Heart left ventricle (tissue), 16 donors: ENCODE measurements at regions of chr9 and their contacts with region 1.

Region 1: DNA sequence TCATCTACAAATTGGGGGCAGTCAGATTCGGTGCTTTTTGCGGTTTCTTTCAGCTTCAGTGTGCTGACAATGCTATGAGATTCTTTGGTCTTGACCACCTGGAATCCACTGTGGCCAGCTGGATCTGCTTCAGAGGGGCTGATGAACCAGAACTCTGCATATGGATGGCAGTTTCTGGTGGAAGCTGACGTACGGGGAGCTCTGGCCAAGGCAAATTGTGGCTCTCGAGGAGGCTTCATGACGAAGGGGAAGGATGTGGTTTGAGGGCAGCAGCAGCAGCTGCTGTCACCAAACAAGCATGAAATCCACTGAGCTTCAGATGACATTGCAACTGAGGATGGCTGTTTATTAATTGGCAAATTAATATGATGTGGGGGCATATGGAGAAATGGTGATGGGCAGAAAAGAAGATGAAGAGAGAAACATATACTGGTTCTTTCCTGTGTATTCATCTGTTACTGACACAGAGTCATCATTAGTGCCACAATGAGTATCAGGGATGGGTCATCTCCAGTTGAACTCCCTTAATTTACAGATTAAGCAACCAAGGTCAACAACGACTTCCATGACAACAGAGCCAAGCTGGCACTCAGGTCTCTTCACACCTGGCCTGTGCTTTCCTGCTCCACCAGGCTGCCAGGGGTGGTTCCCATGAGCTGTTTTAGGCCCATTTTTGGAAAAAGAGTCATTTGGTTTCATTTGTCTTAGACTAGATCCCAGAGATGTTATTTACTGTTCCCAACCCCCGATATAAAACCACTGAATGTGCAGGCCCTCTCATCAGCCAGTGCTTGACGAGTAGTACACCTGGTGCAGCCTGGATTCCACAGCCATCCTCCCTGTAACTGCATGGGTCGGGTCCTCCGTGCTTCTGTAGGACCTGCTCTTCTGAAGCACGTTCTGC is 134.7 kb downstream of the AOPEP start:
- DNase-seq: peak in 2 of 5 donors; percentile 26 to 31
- ATAC-seq: peak in 1 of 4 donors; percentile 54
- H3K4me3 ChIP-seq: no peak overlapping the region
- H3K27ac ChIP-seq: peak overlapping the region in 1 of 12 donors; percentile 42
- H3K4me1 ChIP-seq: peaks cover 0 to 44% (median 24%) of the 10 kb centered on the region in 12 donors
- H3K27me3 ChIP-seq: no peaks in the 10 kb centered on the region
- CTCF ChIP-seq: no peak
- POLR2A ChIP-seq: no peak

Region 2: GRCh38 chr9:94805585-94805984 is 55.6 kb before region 1 on chr9:
- intact Hi-C with region 1: loop called in 4 of 10 experiments (anchors 5 to 10 kb)
- DNase-seq: no peak
- ATAC-seq: peak in 2 of 4 donors; percentile 57 to 59
- H3K4me3 ChIP-seq: no peak overlapping the region
- H3K27ac ChIP-seq: peak overlapping the region in 9 of 12 donors; percentile 7 to 57 (median 16)
- H3K4me1 ChIP-seq: peaks cover 0 to 61% (median 46%) of the 10 kb centered on the region in 12 donors
- H3K27me3 ChIP-seq: no peaks in the 10 kb centered on the region
- CTCF ChIP-seq: no peak
- POLR2A ChIP-seq: no peak

Region 3: GRCh38 chr9:94812343-94812742 is 48.9 kb before region 1 on chr9:
- intact Hi-C with region 1: loop called in 6 of 10 experiments (anchors 5 to 10 kb)
- DNase-seq: no peak
- ATAC-seq: peak in 3 of 4 donors; percentile 26 to 57 (median 28)
- H3K4me3 ChIP-seq: no peak overlapping the region
- H3K27ac ChIP-seq: peak overlapping the region in 7 of 12 donors; percentile 3 to 47 (median 31)
- H3K4me1 ChIP-seq: peaks cover 0 to 42% (median 24%) of the 10 kb centered on the region in 12 donors
- H3K27me3 ChIP-seq: no peaks in the 10 kb centered on the region
- CTCF ChIP-seq: no peak
- POLR2A ChIP-seq: no peak

Region 4: GRCh38 chr9:94819161-94819699 is 42.0 kb before region 1 on chr9:
- intact Hi-C with region 1: loop called in 5 of 10 experiments (anchors 5 to 10 kb)
- DNase-seq: peak in 2 of 5 donors; percentile 53 to 60
- ATAC-seq: peak in 3 of 4 donors; percentile 70 to 74 (median 72)
- H3K4me3 ChIP-seq: no peak overlapping the region
- H3K27ac ChIP-seq: peak overlapping the region in 11 of 12 donors; percentile 32 to 79 (median 50)
- H3K4me1 ChIP-seq: peaks cover 0 to 55% (median 11%) of the 10 kb centered on the region in 12 donors
- H3K27me3 ChIP-seq: no peaks in the 10 kb centered on the region
- CTCF ChIP-seq: no peak
- POLR2A ChIP-seq: no peak

Region 5: DNA sequence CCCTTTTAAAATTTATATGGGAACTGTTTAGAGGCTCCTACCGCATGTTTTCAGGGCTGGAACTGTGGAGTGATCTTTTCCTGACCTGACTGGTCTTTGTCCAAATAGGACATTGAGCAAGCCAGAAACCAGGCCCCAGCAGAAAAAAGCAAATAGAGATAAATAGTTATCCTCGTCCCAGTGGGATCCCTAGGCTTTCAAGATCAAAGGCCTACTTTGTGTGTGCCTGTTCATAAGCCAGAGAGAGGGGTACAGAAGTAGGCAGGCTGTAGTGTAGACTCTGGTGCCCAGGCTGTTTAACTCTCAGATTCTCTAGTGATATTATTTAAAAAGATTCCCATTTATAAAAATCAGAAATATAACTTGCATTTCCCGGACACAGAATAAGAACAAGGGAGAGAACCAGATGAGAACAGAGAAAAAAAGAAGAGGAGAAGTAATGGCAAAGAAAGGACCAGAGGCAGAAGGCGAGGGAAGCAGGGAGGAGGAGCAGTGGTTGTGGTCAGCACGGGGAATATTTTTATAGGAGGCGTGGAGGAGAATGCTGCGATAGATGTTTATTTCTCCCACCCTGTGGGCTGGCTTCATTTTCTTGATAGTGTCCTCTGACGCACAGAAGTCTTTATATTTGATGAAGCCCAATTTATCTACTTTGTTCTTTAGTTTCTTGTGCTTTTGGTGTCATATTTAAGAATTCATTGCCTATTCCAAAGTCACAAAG is 33.5 kb before region 1 on chr9:
- intact Hi-C with region 1: loop called in 1 of 10 experiments (anchors 5 kb)
- DNase-seq: no peak
- ATAC-seq: peak; percentile 70 to 83 (median 78)
- H3K4me3 ChIP-seq: no peak overlapping the region
- H3K27ac ChIP-seq: peak overlapping the region in 11 of 12 donors; percentile 22 to 67 (median 52)
- H3K4me1 ChIP-seq: peaks cover 0 to 53% (median 23%) of the 10 kb centered on the region in 12 donors
- H3K27me3 ChIP-seq: no peaks in the 10 kb centered on the region
- CTCF ChIP-seq: no peak
- POLR2A ChIP-seq: no peak

Region 6: GRCh38 chr9:94922098-94922607 is 60.9 kb after region 1 on chr9:
- intact Hi-C with region 1: loop called in 1 of 10 experiments (anchors 10 kb)
- DNase-seq: peak in 2 of 5 donors; percentile 44 to 46
- ATAC-seq: peak; percentile 15 to 42 (median 30)
- H3K4me3 ChIP-seq: peak overlapping the region in 1 of 12 donors; percentile 5
- H3K27ac ChIP-seq: peak overlapping the region; percentile 53 to 82 (median 70)
- H3K4me1 ChIP-seq: peaks cover 3 to 49% (median 34%) of the 10 kb centered on the region in 12 donors
- H3K27me3 ChIP-seq: no peaks in the 10 kb centered on the region
- CTCF ChIP-seq: no peak
- POLR2A ChIP-seq: no peak